Activated CD8-positive, alpha-beta T cell treated with anti-CD3 and anti-CD28 coated beads, Interleukin-2, amount 10 ng/mL, durations not matched to agents 7 days and 5 days (primary cell): ENCODE measurements at regions of chr20 and their contacts with region 1.

Region 1: GRCh38 chr20:956330-956951 is 40.3 kb upstream of the ANGPT4 start:
- DNase-seq: peak; percentile 80
- ATAC-seq: peak; percentile 84
- H3K4me3 Mint-ChIP-seq: no peak overlapping the region
- H3K27ac Mint-ChIP-seq: no peak overlapping the region
- H3K4me1 Mint-ChIP-seq: no peaks in the 10 kb centered on the region
- H3K27me3 Mint-ChIP-seq: peaks cover 20% of the 10 kb centered on the region

Region 2: DNA sequence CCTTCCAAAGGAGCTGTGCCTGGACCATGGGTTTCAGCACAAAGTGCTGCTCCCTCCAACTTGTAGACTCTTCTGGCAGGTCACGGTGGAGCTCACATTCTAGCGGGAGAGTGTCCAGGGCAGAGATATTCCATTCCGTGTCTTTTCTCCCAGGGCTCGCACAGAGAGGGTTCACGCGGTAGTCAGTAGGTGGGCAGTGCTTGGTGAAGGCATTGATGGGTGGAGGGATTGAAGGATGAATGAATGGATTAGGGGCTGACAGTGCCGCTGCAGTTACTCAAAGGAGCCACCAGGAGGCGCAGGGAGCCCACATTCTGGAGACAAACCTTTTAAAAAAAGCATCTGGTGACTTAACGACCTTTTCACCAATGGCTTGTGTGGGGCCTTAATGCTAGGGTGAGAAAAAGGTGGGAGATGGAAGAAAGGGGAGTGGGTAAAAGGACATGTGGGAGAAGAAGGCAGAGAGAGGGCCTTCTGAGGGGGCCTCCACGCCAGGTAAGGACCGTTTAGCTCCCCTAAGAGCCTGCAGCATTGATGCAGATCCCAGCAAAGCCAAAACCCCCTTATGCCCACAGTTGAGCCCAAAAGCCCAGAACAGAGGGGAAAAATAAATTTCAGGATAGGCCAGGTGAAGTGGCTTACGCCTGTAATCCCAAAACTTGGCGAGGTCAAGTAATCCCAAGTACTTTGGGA is 140.4 kb before region 1 on chr20:
- CTCF ChIA-PET with region 1: interaction called, 143 read pairs
- POLR2A ChIA-PET with region 1: interaction called, 3 read pairs
- DNase-seq: peak; percentile 74
- ATAC-seq: peak; percentile 55
- H3K4me3 Mint-ChIP-seq: no peak overlapping the region
- H3K27ac Mint-ChIP-seq: no peak overlapping the region
- H3K4me1 Mint-ChIP-seq: no peaks in the 10 kb centered on the region
- H3K27me3 Mint-ChIP-seq: peaks cover 6% of the 10 kb centered on the region

Region 3: DNA sequence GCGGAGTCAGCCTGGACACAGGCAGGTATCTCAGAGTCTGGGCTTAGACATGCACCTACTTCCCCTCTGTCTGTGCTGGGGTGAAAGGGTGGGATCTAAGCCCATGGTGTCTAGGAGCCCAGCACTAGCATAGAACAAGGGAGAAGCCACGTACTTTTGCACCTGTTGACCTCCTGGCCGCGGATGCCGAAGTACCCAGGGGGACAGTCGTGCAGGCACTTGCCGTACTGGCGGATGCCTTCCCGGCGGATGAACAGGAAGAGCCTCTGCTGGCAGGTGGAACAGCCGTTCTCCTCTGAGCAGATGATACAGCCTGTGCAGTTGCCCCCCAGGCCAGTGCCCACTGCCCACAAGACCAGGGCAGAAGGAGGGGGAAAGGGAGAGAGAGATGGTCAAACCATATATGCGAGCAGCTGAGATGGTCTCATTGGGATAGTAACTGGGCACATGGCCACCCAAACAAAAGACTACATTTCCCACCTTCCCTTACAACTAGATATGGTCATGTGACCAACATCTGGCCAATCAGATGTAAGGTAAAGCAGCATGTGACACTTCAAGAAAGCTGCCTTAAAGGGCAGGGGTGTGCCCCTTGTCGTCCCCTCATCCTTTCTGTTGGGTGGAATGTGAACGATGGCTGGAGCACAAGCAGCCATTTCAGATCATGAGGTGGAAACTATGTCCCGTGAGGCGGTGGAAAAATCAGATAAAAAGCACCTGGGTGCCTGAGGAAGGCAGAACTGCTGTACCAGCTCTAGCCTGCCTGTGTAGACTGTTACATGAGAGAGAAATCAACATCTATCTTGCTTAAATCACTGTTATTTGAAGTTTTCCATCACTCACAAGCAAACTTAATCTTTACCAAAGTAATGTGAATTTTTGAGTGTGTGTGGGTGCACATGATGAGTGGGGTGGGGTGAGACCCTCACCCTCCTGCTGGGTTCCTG is 11.6 kb after region 1 on chr20:
- CTCF ChIA-PET with region 1: interaction called, 34 read pairs
- POLR2A ChIA-PET with region 1: no interaction called
- DNase-seq: peak; percentile 32
- ATAC-seq: no peak
- H3K4me3 Mint-ChIP-seq: no peak overlapping the region
- H3K27ac Mint-ChIP-seq: no peak overlapping the region
- H3K4me1 Mint-ChIP-seq: no peaks in the 10 kb centered on the region
- H3K27me3 Mint-ChIP-seq: peaks cover 5% of the 10 kb centered on the region

Region 4: DNA sequence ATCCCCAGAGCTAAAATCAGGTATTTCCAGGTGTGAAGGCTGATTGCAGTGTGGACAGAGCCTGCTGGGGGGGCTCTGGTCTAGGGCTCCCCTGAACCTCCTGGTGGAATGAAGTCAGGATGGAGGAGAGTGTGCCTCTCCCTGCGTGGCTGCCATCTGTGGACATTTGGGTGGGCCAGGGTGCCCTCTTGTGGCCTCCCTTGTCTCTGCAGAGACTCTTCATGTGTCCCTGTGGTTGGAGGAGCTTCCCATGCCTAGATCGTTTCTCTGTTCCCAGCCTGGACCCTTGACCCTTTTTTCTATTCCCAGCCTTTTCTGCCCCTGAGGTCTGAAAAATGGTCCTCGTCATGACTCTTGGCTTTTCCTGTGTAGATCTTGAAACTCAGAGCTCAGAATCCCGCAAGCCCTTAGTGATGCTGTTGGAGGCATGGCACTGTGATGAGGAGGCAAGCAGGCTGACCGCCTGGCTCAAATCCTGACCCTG is 152.0 kb after region 1 on chr20:
- CTCF ChIA-PET with region 1: interaction called, 13 read pairs
- POLR2A ChIA-PET with region 1: no interaction called
- DNase-seq: peak; percentile 64
- ATAC-seq: peak; percentile 77
- H3K4me3 Mint-ChIP-seq: no peak overlapping the region
- H3K27ac Mint-ChIP-seq: no peak overlapping the region
- H3K4me1 Mint-ChIP-seq: no peaks in the 10 kb centered on the region
- H3K27me3 Mint-ChIP-seq: no peaks in the 10 kb centered on the region

Region 5: DNA sequence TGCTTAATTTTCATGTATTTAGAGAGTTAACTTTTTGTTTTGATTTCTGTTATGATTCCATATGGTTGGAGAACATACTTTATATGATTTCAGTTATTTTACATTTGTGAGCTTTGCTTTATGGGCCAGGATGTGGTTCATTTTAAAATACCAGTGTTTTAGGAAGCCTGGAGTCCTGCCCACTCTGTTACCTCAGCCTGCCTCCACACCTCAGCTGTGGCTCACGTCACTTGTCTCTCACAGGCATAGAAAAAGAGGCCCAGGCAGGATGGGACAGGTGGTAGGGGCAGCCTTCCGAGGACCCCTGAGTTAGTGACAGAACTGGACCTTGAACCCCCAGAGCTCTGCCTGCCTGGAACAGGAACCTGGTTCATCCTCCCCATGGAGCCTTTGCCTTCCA is 177.9 kb after region 1 on chr20:
- CTCF ChIA-PET with region 1: no interaction called
- POLR2A ChIA-PET with region 1: no interaction called
- DNase-seq: peak; percentile 54
- ATAC-seq: peak; percentile 69
- H3K4me3 Mint-ChIP-seq: no peak overlapping the region
- H3K27ac Mint-ChIP-seq: peak overlapping the region; percentile 2
- H3K4me1 Mint-ChIP-seq: peaks cover 23% of the 10 kb centered on the region
- H3K27me3 Mint-ChIP-seq: no peaks in the 10 kb centered on the region